ENCODE measurements at regions of chr17 and their contacts with region 1.

Region 1: GRCh38 chr17:63993368-63993985 is 4.7 kb upstream of the PRR29 start:
- DNase-seq: no peak
- ATAC-seq: no peak
- H3K4me3 ChIP-seq: no peak overlapping the region
- H3K27ac ChIP-seq: no peak overlapping the region
- H3K4me1 ChIP-seq: peaks cover 5 to 30% of the 10 kb centered on the region in 2 experiments
- H3K27me3 ChIP-seq: peaks cover 12 to 28% of the 10 kb centered on the region in 2 experiments; a peak in 4 of 5 replicates
- CTCF ChIP-seq: no peak
- EP300 ChIP-seq: no peak
- POLR2A ChIP-seq: no peak
- RAD21 ChIP-seq: no peak

Region 2: GRCh38 chr17:63946440-63947367 is 46.8 kb before region 1 on chr17:
- CTCF ChIA-PET with region 1: interaction called, 3 read pairs
- POLR2A ChIA-PET with region 1: no interaction called
- in situ Hi-C with region 1: no loop called
- intact Hi-C with region 1: loop called (anchors 5 kb)
- DNase-seq: peak; percentile 77 to 91 (median 90)
- ATAC-seq: peak; percentile 92
- H3K4me3 ChIP-seq: no peak overlapping the region
- H3K27ac ChIP-seq: no peak overlapping the region
- H3K4me1 ChIP-seq: peaks cover 3 to 30% of the 10 kb centered on the region in 2 experiments; a peak in 3 of 5 replicates
- H3K27me3 ChIP-seq: peaks cover 21 to 69% of the 10 kb centered on the region in 2 experiments; a peak in 4 of 5 replicates
- CTCF ChIP-seq: peak; percentile 61 to 82 (median 72)
- EP300 ChIP-seq: no peak
- POLR2A ChIP-seq: no peak
- RAD21 ChIP-seq: peak; percentile 34 to 63; a peak in 3 of 4 replicates

Measured in K562 (cell line).